Endothelial cell of umbilical vein (primary cell): ENCODE measurements at regions of chr11 and their contacts with region 1.

Region 1: DNA sequence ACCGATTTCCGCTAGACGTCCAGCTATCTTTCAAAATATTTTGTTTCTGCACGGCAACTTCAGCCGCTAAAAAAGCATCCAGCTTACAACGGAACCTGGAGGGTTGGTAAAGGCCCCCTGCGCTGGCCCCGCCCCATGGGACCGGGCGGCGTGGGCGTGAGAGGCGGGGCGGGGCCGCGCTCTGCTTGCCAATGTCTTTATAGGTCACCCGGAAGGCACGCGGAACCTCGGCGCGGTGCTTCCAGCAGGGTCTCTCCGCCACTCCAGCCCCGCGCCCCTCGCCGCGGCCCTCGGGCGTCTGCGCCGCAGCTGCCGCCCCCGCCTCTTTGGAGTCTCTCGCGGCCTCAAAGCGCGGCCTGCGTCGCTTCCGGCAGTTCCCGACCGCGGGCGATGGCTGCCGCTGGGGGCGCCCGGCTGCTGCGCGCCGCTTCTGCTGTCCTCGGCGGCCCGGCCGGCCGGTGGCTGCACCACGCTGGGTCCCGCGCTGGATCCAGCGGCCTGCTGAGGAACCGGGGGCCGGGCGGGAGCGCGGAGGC is at the start of gene FDX1:
- DNase-seq: peak; percentile 84
- H3K4me3 ChIP-seq: peak within 1 kb of the TSS; percentile 23 to 75 (median 57)
- H3K27ac ChIP-seq: peak within 1 kb of the TSS; percentile 72
- H3K4me1 ChIP-seq: peaks cover 27% of the 10 kb centered on the region
- H3K27me3 ChIP-seq: no peaks in the 10 kb centered on the region
- CTCF ChIP-seq: peak; percentile 50 to 59
- POLR2A ChIP-seq: no peak
- total RNA-seq, gene FDX1: 9.9 and 11.0 TPM in 2 replicates

Region 2: DNA sequence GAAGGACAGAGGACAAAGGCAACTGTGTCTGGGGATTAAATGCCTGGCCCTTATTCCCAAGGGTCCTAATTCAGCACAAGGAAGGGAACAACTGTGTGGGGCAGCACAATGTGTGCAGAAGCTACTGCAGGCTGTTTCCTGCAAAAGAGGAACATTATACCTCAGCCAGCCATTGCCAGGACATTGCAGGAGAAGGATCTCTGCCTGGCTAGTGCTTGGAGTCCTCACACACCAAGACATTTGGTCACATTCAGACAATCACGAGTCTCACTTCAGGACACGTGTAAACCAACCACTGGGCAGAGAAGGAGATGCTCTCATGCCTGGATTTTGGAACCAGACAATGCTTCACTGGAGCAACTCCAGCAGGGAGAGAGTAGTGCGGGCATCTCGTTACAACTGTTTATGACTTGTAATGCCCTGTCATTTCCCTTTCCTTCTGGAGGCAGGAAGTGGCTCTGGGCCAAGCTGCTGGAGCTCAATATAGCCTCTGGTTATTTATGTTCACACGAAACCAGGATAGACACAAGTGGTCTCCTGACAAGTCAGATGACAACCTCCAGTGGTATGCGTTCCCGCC is 360.6 kb before region 1 on chr11:
- CTCF ChIA-PET with region 1: interaction called, 3 read pairs
- POLR2A ChIA-PET with region 1: no interaction called
- dilution Hi-C with region 1: no loop called
- intact Hi-C with region 1: loop called (anchors 1 kb)
- DNase-seq: peak; percentile 97
- H3K4me3 ChIP-seq: no peak overlapping the region
- H3K27ac ChIP-seq: peak overlapping the region; percentile 95
- H3K4me1 ChIP-seq: peaks cover 22% of the 10 kb centered on the region
- H3K27me3 ChIP-seq: no peaks in the 10 kb centered on the region
- CTCF ChIP-seq: no peak
- POLR2A ChIP-seq: peak; percentile 71

Region 3: GRCh38 chr11:110173811-110174644 is 255.8 kb before region 1 on chr11:
- CTCF ChIA-PET with region 1: interaction called, 4 read pairs
- POLR2A ChIA-PET with region 1: no interaction called
- dilution Hi-C with region 1: no loop called
- intact Hi-C with region 1: loop called (anchors 1 kb)
- DNase-seq: peak; percentile 77
- H3K4me3 ChIP-seq: peak overlapping the region in 1 of 3 experiments; percentile 34
- H3K27ac ChIP-seq: no peak overlapping the region
- H3K4me1 ChIP-seq: peaks cover 7% of the 10 kb centered on the region
- H3K27me3 ChIP-seq: no peaks in the 10 kb centered on the region
- CTCF ChIP-seq: peak; percentile 87 to 92
- POLR2A ChIP-seq: no peak

Region 4: DNA sequence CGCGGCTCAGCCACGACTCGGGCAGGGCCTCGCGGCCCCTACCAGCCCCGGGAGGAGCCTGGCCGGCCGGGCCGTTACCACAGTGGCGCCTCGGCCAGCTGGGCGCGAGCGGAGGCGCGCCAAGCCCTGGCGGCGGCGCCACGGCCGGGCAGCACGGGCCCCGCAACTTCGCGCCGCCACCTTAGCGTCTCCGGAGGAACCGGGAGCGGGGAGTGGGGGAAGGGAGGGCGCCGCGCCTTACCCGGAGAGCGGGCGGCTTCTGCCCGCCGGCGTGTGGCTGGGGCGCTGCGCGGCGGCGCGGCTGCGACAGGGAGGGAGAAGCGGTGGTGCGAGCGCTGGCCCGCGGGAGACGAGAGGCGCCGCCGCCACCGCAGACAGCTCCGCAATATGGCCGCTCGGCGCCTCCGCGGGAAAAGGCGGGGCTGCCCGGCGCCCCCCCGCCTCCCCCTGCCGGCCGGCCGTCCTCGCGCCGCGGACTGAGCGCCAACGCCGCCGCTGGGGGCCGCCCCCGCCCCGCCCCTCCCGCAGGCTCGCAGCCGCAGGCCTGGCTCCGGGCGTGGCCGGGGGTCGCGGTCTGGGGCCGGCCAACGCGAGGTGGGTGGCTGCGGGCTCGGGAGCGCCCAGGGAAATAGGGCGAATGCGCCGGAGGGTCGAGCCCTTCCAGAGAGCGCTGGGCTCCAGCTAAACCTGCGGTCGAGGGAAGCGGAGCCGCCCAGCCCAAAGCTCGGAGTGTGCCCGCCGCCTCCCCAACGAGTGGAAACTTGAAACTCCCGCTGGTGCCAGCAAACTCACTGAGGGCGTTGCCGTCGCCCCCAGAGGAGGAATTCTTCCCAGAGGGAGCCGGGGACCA is 133.3 kb before region 1 on chr11 and contains the start of gene RDX:
- CTCF ChIA-PET with region 1: interaction called, 3 read pairs
- POLR2A ChIA-PET with region 1: no interaction called
- dilution Hi-C with region 1: no loop called
- intact Hi-C with region 1: loop called (anchors 1 kb)
- DNase-seq: peak; percentile 78
- H3K4me3 ChIP-seq: peak within 1 kb of the TSS; percentile 94 to 96 (median 95)
- H3K27ac ChIP-seq: peak within 1 kb of the TSS; percentile 96
- H3K4me1 ChIP-seq: peaks cover 31% of the 10 kb centered on the region
- H3K27me3 ChIP-seq: no peaks in the 10 kb centered on the region
- CTCF ChIP-seq: peak in 1 of 2 donors; percentile 1
- POLR2A ChIP-seq: peak; percentile 75
- total RNA-seq, gene RDX: 239 and 280 TPM in 2 replicates

Region 5: GRCh38 chr11:110490886-110491285 is 61.1 kb after region 1 on chr11:
- CTCF ChIA-PET with region 1: no interaction called
- POLR2A ChIA-PET with region 1: no interaction called
- dilution Hi-C with region 1: no loop called
- intact Hi-C with region 1: no loop called
- DNase-seq: no peak
- H3K4me3 ChIP-seq: no peak overlapping the region
- H3K27ac ChIP-seq: no peak overlapping the region
- H3K4me1 ChIP-seq: no peaks in the 10 kb centered on the region
- H3K27me3 ChIP-seq: peaks cover 0 to 2% of the 10 kb centered on the region in 2 experiments
- CTCF ChIP-seq: no peak
- POLR2A ChIP-seq: no peak

Region 6: GRCh38 chr11:111393096-111393495 is 963.3 kb after region 1 on chr11:
- CTCF ChIA-PET with region 1: no interaction called
- POLR2A ChIA-PET with region 1: no interaction called
- dilution Hi-C with region 1: no loop called
- intact Hi-C with region 1: no loop called
- DNase-seq: no peak
- H3K4me3 ChIP-seq: no peak overlapping the region
- H3K27ac ChIP-seq: no peak overlapping the region
- H3K4me1 ChIP-seq: no peaks in the 10 kb centered on the region
- H3K27me3 ChIP-seq: no peaks in the 10 kb centered on the region
- CTCF ChIP-seq: no peak
- POLR2A ChIP-seq: no peak